MCF 10A (cell line): ENCODE measurements at regions of chr1 and their contacts with region 1.

Region 1: GRCh38 chr1:164617377-164618201 is 58.6 kb downstream of the PBX1 start:
- DNase-seq: peak; percentile 63
- H3K4me3 Mint-ChIP-seq: no peak overlapping the region
- H3K27ac Mint-ChIP-seq: no peak overlapping the region
- H3K4me1 Mint-ChIP-seq: peaks cover 14% of the 10 kb centered on the region
- H3K27me3 Mint-ChIP-seq: no peaks in the 10 kb centered on the region
- CTCF ChIP-seq: peak; percentile 89

Region 2: GRCh38 chr1:163361123-163361934 is 1256.3 kb before region 1 on chr1:
- CTCF ChIA-PET with region 1: no interaction called
- POLR2A ChIA-PET with region 1: no interaction called
- intact Hi-C with region 1: loop called (anchors 1 kb)
- DNase-seq: peak; percentile 58
- H3K4me3 Mint-ChIP-seq: no peak overlapping the region
- H3K27ac Mint-ChIP-seq: no peak overlapping the region
- H3K4me1 Mint-ChIP-seq: no peaks in the 10 kb centered on the region
- H3K27me3 Mint-ChIP-seq: no peaks in the 10 kb centered on the region
- CTCF ChIP-seq: peak; percentile 65

Region 3: GRCh38 chr1:163528710-163529348 is 1088.8 kb before region 1 on chr1:
- CTCF ChIA-PET with region 1: interaction called, 9 read pairs
- POLR2A ChIA-PET with region 1: no interaction called
- intact Hi-C with region 1: loop called (anchors 2 kb)
- DNase-seq: peak; percentile 62
- H3K4me3 Mint-ChIP-seq: no peak overlapping the region
- H3K27ac Mint-ChIP-seq: no peak overlapping the region
- H3K4me1 Mint-ChIP-seq: no peaks in the 10 kb centered on the region
- H3K27me3 Mint-ChIP-seq: no peaks in the 10 kb centered on the region
- CTCF ChIP-seq: peak; percentile 66

Region 4: DNA sequence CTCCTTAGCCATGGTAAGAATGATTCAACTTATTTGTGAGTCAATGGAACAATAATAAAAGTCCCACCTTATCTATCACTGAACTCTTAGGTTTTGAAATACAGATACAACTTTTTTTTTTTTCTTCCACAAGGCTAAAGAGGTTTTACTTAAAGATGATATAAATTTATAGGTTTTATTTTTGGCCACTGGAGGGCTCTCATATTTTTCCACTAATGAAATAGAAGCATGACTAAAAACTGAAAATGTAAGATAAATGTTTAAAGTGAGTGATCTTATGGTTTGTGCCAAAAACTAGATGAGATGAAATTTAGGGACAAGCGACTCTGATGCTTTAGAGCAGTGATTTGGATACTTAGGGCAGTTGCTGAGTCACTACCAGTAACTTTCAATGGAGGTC is 796.8 kb before region 1 on chr1:
- CTCF ChIA-PET with region 1: interaction called, 4 read pairs
- POLR2A ChIA-PET with region 1: no interaction called
- intact Hi-C with region 1: loop called (anchors 1 kb)
- DNase-seq: peak; percentile 25
- H3K4me3 Mint-ChIP-seq: no peak overlapping the region
- H3K27ac Mint-ChIP-seq: no peak overlapping the region
- H3K4me1 Mint-ChIP-seq: peaks cover 8% of the 10 kb centered on the region
- H3K27me3 Mint-ChIP-seq: no peaks in the 10 kb centered on the region
- CTCF ChIP-seq: peak; percentile 41

Region 5: GRCh38 chr1:164240083-164240482 is 377.5 kb before region 1 on chr1:
- CTCF ChIA-PET with region 1: interaction called, 9 read pairs
- POLR2A ChIA-PET with region 1: no interaction called
- intact Hi-C with region 1: loop called (anchors 2 kb)
- DNase-seq: peak; percentile 52
- H3K4me3 Mint-ChIP-seq: no peak overlapping the region
- H3K27ac Mint-ChIP-seq: no peak overlapping the region
- H3K4me1 Mint-ChIP-seq: no peaks in the 10 kb centered on the region
- H3K27me3 Mint-ChIP-seq: no peaks in the 10 kb centered on the region
- CTCF ChIP-seq: peak; percentile 30

Region 6: DNA sequence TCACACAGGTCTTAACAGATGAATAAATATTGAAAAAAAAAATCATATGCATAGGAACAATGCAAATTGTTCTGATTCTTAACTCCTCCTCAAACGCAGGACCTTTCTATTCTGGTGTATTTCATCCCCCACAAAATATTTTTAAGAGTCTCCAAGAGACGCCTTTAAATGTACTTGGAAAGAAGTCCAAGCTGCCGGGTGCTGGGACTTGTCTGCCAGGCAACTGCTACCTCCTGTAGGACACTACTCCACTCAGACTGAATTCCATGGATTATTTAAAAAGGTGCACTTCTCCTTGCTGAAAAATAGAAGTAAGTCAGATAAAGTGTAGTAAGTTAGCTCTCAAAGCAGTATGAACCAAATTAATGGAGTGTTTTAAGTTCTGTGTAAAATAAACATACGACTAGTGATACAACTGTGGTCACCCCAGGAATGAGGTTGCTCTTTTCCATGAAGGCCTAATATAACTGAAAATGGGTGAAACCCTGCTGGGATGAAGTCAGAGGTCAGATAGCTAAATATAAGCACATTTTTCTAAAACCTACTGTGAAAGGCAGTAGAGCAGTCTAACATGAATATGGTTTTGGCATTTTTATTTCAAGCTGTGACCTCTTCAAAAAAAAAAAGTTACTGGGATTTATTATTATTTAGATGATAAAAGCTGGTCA is 247.8 kb before region 1 on chr1:
- CTCF ChIA-PET with region 1: no interaction called
- POLR2A ChIA-PET with region 1: no interaction called
- intact Hi-C with region 1: no loop called
- DNase-seq: no peak
- H3K4me3 Mint-ChIP-seq: no peak overlapping the region
- H3K27ac Mint-ChIP-seq: no peak overlapping the region
- H3K4me1 Mint-ChIP-seq: no peaks in the 10 kb centered on the region
- H3K27me3 Mint-ChIP-seq: no peaks in the 10 kb centered on the region
- CTCF ChIP-seq: no peak

Region 7: DNA sequence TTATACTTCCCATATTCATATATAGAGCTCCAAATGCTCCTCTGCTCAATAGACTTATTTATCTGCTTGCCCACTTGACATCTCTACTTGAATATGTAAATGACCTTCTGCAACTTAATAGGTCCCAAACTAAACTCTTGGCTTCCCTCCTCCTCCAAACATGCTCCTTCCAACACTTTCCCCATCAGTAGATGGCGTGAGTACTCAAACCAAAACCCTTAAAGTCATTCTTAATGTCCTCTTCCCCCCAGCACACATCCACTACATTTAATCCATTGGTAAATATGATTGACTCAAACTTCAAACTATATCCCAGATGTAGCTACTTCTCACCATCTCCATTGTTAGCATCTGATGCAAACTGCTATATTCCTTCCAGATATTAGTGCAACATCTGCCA is 107.2 kb before region 1 on chr1:
- CTCF ChIA-PET with region 1: interaction called, 9 read pairs
- POLR2A ChIA-PET with region 1: no interaction called
- intact Hi-C with region 1: loop called (anchors 2 kb)
- DNase-seq: peak; percentile 28
- H3K4me3 Mint-ChIP-seq: no peak overlapping the region
- H3K27ac Mint-ChIP-seq: no peak overlapping the region
- H3K4me1 Mint-ChIP-seq: no peaks in the 10 kb centered on the region
- H3K27me3 Mint-ChIP-seq: peaks cover 5% of the 10 kb centered on the region
- CTCF ChIP-seq: no peak

Region 8: GRCh38 chr1:164630626-164631396 is 13.2 kb after region 1 on chr1:
- CTCF ChIA-PET with region 1: interaction called, 14 read pairs
- POLR2A ChIA-PET with region 1: interaction called, 7 read pairs
- intact Hi-C with region 1: no loop called
- DNase-seq: peak; percentile 90
- H3K4me3 Mint-ChIP-seq: no peak overlapping the region
- H3K27ac Mint-ChIP-seq: no peak overlapping the region
- H3K4me1 Mint-ChIP-seq: peaks cover 13% of the 10 kb centered on the region
- H3K27me3 Mint-ChIP-seq: no peaks in the 10 kb centered on the region
- CTCF ChIP-seq: no peak

Region 9: DNA sequence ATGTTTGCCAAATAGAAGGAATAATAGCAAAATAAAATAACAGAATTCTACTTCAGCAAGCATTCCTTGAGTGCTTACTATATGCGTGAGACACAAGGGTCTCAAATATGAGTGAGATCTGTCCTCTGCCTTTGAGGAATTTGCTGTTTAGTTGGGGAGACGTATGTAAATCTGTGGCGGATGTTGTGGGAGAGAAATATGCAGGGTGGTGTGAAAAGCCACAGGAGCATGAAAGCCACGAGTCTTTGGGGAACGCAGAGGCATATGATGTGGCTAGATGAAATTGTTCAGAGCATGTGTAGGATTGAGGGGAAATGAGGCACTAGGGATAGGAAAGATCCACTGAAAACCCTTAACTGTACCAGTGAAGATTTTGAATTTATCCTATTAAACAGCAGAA is 185.8 kb after region 1 on chr1:
- CTCF ChIA-PET with region 1: no interaction called
- POLR2A ChIA-PET with region 1: no interaction called
- intact Hi-C with region 1: no loop called
- DNase-seq: no peak
- H3K4me3 Mint-ChIP-seq: no peak overlapping the region
- H3K27ac Mint-ChIP-seq: no peak overlapping the region
- H3K4me1 Mint-ChIP-seq: no peaks in the 10 kb centered on the region
- H3K27me3 Mint-ChIP-seq: no peaks in the 10 kb centered on the region
- CTCF ChIP-seq: no peak

Region 10: DNA sequence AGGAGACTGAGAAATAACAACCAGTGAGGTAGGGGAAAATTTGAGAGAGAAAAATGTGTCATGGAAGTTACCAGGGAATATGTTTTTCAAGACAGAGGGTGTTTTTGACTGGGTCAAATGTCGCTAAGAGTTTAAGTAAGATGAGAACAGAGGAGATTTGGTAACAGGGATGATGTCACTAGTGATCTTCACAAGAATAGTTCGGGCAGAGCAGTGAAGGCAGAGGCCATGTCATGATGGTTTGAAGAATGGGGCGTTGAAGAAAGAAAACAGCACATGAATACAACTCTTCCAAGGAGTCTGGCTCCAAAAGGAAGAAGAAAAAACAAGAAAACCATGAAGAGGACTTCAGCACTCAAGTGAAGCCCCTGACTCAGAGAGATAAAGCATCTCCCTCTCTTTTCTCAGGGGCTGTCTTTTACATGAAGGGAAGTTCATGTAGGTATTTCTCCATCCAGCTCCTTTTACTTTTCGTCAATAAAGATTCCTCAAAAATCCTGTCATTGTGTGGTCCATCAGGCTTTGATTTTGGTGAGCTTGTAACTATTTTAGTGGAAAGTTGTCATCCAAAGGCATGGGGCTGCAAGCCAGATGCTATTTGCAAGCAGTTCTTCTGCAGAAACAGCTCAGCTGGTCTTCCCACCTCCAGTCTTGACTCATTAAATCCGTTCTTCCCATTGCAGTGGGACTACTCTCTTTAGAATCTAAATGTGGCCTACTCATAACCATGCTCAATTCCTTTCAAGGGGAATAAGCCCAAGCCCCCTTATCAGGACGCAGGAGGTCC is 341.6 kb after region 1 on chr1:
- CTCF ChIA-PET with region 1: no interaction called
- POLR2A ChIA-PET with region 1: no interaction called
- intact Hi-C with region 1: no loop called
- DNase-seq: no peak
- H3K4me3 Mint-ChIP-seq: no peak overlapping the region
- H3K27ac Mint-ChIP-seq: no peak overlapping the region
- H3K4me1 Mint-ChIP-seq: no peaks in the 10 kb centered on the region
- H3K27me3 Mint-ChIP-seq: no peaks in the 10 kb centered on the region
- CTCF ChIP-seq: no peak